GM12878 (cell line): ENCODE measurements at regions of chr17 and their contacts with region 1.

Region 1: DNA sequence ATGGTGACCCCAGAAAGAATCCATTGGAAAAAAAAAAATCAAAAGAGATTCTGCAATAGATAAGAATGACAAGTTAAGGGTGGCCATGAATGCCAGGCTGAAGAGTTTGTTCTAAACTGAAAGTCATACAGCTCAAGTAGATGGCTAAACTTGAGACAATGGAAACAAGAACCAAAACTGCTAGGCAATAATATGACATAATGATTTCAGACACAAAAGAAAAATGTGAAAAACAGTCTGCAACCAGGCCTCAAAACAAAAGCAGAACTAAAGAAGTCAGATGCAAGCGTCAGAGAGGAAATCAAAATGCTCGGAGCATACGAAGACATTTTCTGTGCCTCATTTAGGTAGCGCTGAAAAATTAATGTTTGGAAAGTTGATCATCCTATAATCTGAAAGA is 54.4 kb upstream of the YPEL2 start:
- DNase-seq: peak; percentile 70
- ATAC-seq: peak; percentile 99
- H3K4me3 ChIP-seq: no peak overlapping the region
- H3K27ac ChIP-seq: no peak overlapping the region
- H3K4me1 ChIP-seq: peaks cover 4% of the 10 kb centered on the region; the same call in 1 of the 2 replicates
- H3K27me3 ChIP-seq: no peaks in the 10 kb centered on the region
- CTCF ChIP-seq: no peak
- EP300 ChIP-seq: no peak
- POLR2A ChIP-seq: no peak
- RAD21 ChIP-seq: no peak

Region 2: DNA sequence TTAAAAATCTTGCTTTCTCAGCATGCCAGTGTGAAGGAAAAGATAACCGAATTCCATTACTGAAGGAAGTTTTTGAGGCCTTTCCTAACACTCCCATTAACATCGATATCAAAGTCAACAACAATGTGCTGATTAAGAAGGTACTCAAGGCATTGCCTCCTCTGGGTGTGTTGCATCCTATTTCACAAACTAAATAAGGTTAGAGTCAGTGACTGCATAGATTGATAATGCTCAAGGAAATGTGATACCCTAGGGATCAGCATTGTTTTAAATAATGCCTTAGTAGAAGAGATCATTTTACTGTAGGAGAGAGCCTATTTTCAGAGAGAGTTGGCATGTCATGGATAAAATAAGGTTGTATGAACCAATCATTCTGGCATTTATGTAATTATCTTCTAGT is 19.9 kb before region 1 on chr17:
- CTCF ChIA-PET with region 1: no interaction called
- POLR2A ChIA-PET with region 1: no interaction called
- RAD21 ChIA-PET with region 1: no interaction called
- SMC1A ChIA-PET with region 1: interaction called, 3 read pairs
- in situ Hi-C with region 1: no loop called
- intact Hi-C with region 1: loop called (anchors 2 kb)
- DNase-seq: no peak
- ATAC-seq: no peak
- H3K4me3 ChIP-seq: no peak overlapping the region
- H3K27ac ChIP-seq: no peak overlapping the region
- H3K4me1 ChIP-seq: no peaks in the 10 kb centered on the region
- H3K27me3 ChIP-seq: no peaks in the 10 kb centered on the region
- CTCF ChIP-seq: no peak
- EP300 ChIP-seq: no peak
- POLR2A ChIP-seq: no peak
- RAD21 ChIP-seq: no peak